Activated T-helper 2 cell treated with anti-CD3 and anti-CD28 coated beads, Interferon-gamma antibody, Interleukin-2, Interleukin-4, amounts not matched to agents 10 μg/mL and 5 μg/mL and 100 μg/mL, durations not matched to agents 14 hours and 24 hours and 36 hours (primary cell): ENCODE measurements at regions of chr6 and their contacts with region 1.

Region 1: DNA sequence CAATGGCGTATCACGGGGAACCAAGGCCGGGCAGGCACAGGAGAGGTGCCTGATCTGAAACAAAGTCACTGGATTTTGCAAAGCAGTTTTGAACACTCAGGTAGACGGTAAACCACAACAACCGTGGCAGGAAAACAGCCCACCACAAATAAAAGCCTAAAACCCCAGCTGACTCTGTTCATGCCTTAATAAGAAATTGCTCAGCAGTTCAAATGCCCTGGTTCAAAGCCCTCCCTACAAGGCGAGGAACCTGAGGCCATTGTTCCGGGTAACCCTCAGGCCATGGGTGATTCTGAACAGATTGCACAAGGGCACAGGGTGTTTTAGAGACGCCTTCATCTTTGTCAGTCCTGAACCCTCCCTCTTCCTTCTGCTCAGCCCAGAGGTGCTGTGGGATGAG is 114.1 kb downstream of the MAP3K7 start:
- DNase-seq: peak; percentile 57
- H3K4me3 Mint-ChIP-seq: peak overlapping the region; percentile 72
- H3K27ac Mint-ChIP-seq: peak overlapping the region; percentile 93
- H3K4me1 Mint-ChIP-seq: peaks cover 94% of the 10 kb centered on the region
- H3K27me3 Mint-ChIP-seq: no peaks in the 10 kb centered on the region

Region 2: GRCh38 chr6:90401933-90402830 is 70.6 kb before region 1 on chr6:
- intact Hi-C with region 1: loop called (anchors 1 kb)
- DNase-seq: peak; percentile 41
- H3K4me3 Mint-ChIP-seq: peak overlapping the region; percentile 15
- H3K27ac Mint-ChIP-seq: peak overlapping the region; percentile 88
- H3K4me1 Mint-ChIP-seq: peaks cover 85% of the 10 kb centered on the region
- H3K27me3 Mint-ChIP-seq: no peaks in the 10 kb centered on the region

Region 3: GRCh38 chr6:90411292-90411781 is 61.4 kb before region 1 on chr6:
- intact Hi-C with region 1: loop called (anchors 1 kb)
- DNase-seq: peak; percentile 62
- H3K4me3 Mint-ChIP-seq: no peak overlapping the region
- H3K27ac Mint-ChIP-seq: peak overlapping the region; percentile 81
- H3K4me1 Mint-ChIP-seq: peaks cover 81% of the 10 kb centered on the region
- H3K27me3 Mint-ChIP-seq: no peaks in the 10 kb centered on the region

Region 4: GRCh38 chr6:90458353-90459224 is 14.2 kb before region 1 on chr6:
- intact Hi-C with region 1: loop called (anchors 1 kb)
- DNase-seq: peak; percentile 68
- H3K4me3 Mint-ChIP-seq: peak overlapping the region; percentile 27
- H3K27ac Mint-ChIP-seq: peak overlapping the region; percentile 95
- H3K4me1 Mint-ChIP-seq: peaks cover 76% of the 10 kb centered on the region
- H3K27me3 Mint-ChIP-seq: no peaks in the 10 kb centered on the region